ENCODE measurements at regions of chr18 and their contacts with region 1.

Region 1: DNA sequence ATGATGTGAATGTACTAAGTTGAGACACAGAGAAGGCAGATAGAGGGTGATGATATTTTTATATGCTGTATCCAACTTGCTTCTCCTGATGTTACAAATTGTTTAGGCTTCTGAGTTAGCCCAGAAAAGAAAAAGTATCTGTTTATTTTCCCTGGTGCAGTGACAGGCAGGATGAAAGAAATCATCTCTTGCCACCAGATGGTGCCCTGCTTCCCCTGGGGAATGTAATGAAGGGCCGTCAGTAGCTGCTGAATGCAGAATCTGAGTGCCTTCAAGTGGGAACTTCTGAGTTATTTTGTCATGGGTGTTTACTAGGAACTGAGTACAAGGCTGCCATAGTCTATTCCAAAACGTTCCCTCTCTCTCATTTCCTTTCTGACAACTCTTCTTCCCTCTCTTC is 525.6 kb downstream of the MBD2 start:
- DNase-seq: peak; percentile 53
- H3K4me3 ChIP-seq: no peak overlapping the region
- H3K27ac ChIP-seq: no peak overlapping the region
- H3K4me1 ChIP-seq: no peaks in the 10 kb centered on the region
- H3K27me3 ChIP-seq: no peaks in the 10 kb centered on the region
- CTCF ChIP-seq: peak; percentile 42; the same call in 1 of the 2 replicates
- EP300 ChIP-seq: no peak
- RAD21 ChIP-seq: peak; percentile 87

Region 2: GRCh38 chr18:53521068-53521467 is 177.8 kb before region 1 on chr18:
- CTCF ChIA-PET with region 1: no interaction called
- POLR2A ChIA-PET with region 1: no interaction called
- DNase-seq: no peak
- H3K4me3 ChIP-seq: no peak overlapping the region
- H3K27ac ChIP-seq: no peak overlapping the region
- H3K4me1 ChIP-seq: no peaks in the 10 kb centered on the region
- H3K27me3 ChIP-seq: no peaks in the 10 kb centered on the region
- CTCF ChIP-seq: no peak
- EP300 ChIP-seq: no peak
- RAD21 ChIP-seq: no peak

Region 3: DNA sequence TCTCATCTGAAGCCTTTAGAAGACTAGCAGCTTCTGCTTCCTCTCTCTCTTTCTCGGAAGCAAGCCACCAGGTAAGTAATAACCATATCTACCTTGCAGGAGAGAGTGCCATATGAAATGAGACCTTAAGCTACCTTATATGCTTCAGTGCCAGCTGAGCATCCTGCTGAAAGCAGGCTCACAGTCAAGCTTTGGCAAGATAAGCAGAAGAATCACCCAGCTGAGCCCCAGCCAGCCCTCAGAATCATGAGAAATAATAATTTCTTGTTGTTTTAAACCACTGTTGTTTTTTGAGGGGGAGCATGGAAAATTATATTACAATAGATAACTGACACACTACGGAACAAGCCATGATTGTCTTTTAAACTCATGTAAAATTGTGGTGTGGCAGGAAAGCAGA is 11.2 kb after region 1 on chr18:
- CTCF ChIA-PET with region 1: interaction called, 11 read pairs
- POLR2A ChIA-PET with region 1: no interaction called
- DNase-seq: no peak
- H3K4me3 ChIP-seq: no peak overlapping the region
- H3K27ac ChIP-seq: no peak overlapping the region
- H3K4me1 ChIP-seq: peaks cover 0 to 4% of the 10 kb centered on the region in 2 experiments; a peak in 2 of 4 replicates
- H3K27me3 ChIP-seq: no peaks in the 10 kb centered on the region
- CTCF ChIP-seq: no peak
- EP300 ChIP-seq: no peak
- RAD21 ChIP-seq: no peak

Region 4: GRCh38 chr18:53864770-53865169 is 165.9 kb after region 1 on chr18:
- CTCF ChIA-PET with region 1: interaction called, 11 read pairs
- POLR2A ChIA-PET with region 1: no interaction called
- DNase-seq: peak; percentile 14
- H3K4me3 ChIP-seq: no peak overlapping the region
- H3K27ac ChIP-seq: no peak overlapping the region
- H3K4me1 ChIP-seq: no peaks in the 10 kb centered on the region
- H3K27me3 ChIP-seq: no peaks in the 10 kb centered on the region
- CTCF ChIP-seq: no peak
- EP300 ChIP-seq: no peak
- RAD21 ChIP-seq: peak; percentile 63

Region 5: DNA sequence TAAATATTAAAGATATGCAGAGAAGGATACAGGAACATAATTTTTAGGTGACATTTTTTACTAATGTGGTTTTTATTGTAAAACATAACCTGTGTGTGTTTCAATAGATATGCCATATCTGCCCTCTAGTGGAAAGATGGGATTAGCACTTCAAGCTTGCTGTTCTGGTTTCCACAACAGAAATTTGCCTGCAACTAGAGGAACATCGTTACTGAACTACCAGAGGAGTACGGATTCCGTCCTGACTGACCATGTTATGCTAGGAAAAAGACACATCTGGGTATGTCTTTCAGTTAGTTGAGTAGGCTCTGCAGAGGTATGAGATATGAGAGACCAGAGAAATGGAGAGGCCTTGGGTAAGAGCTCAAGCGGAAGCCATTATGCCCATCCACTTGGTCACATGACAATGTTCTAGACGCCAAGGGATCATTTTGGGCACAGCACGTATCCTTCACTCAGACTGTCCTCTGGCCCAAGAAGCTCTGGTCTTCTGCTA is 420.7 kb after region 1 on chr18:
- CTCF ChIA-PET with region 1: interaction called, 41 read pairs
- POLR2A ChIA-PET with region 1: no interaction called
- DNase-seq: peak; percentile 30
- H3K4me3 ChIP-seq: no peak overlapping the region
- H3K27ac ChIP-seq: no peak overlapping the region
- H3K4me1 ChIP-seq: peaks cover 0 to 3% of the 10 kb centered on the region in 2 experiments; a peak in 1 of 4 replicates
- H3K27me3 ChIP-seq: no peaks in the 10 kb centered on the region
- CTCF ChIP-seq: peak; percentile 91
- EP300 ChIP-seq: no peak
- RAD21 ChIP-seq: peak; percentile 88

Region 6: DNA sequence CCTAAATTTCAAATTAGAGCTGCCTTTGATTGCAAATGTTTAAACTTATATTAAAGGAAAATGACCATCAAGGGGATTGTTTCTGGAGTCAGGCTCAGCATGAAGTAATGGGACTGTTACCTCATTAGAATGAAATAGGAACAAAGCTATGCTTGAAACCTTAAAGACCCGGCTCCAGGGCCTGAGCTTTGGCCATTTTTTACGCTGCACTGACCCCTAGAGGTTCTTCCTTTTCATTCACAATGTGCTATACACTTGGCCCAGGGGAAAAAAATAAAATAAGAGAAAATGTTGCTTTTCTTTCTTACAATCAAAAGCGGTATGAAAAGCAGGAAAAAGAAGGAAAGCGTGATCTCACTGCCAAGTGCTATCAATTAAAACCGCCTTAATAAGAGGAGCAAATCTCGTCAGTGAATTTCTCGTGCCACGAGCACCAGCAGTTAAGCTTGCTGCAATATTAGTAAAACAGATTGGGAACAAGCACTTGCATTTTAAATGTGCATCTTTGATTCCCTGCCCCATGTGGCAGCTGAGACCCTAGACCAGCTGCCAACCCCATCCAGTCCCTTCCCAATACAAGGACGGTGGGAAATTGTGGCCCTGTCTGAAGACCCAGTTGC is 429.0 kb after region 1 on chr18:
- CTCF ChIA-PET with region 1: interaction called, 10 read pairs
- POLR2A ChIA-PET with region 1: no interaction called
- DNase-seq: peak; percentile 55
- H3K4me3 ChIP-seq: no peak overlapping the region
- H3K27ac ChIP-seq: no peak overlapping the region
- H3K4me1 ChIP-seq: peaks cover 0 to 8% of the 10 kb centered on the region in 2 experiments; a peak in 1 of 4 replicates
- H3K27me3 ChIP-seq: no peaks in the 10 kb centered on the region
- CTCF ChIP-seq: peak; percentile 77
- EP300 ChIP-seq: no peak
- RAD21 ChIP-seq: peak; percentile 88

Region 7: DNA sequence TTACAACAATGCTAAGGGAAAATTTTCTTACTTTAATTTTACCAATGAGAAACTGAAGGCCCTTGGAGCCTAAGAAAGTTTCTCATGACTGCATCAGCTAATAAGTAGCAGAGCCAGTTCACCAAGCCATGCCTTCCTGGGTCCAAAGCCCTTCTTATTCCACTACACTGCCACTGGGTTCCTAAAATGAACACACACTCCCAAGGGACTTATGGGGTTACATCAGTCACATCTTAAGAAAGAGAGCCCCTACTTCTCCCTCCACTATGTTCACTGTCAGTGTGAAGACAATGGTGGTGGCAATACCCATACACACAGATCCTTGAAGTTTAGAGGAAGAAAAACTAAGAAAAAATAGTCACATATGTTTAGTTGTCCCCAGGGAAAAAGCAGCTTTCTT is 505.0 kb after region 1 on chr18:
- CTCF ChIA-PET with region 1: no interaction called
- POLR2A ChIA-PET with region 1: no interaction called
- DNase-seq: no peak
- H3K4me3 ChIP-seq: no peak overlapping the region
- H3K27ac ChIP-seq: no peak overlapping the region
- H3K4me1 ChIP-seq: no peaks in the 10 kb centered on the region; a peak in 1 of 4 replicates
- H3K27me3 ChIP-seq: no peaks in the 10 kb centered on the region
- CTCF ChIP-seq: no peak
- EP300 ChIP-seq: no peak
- RAD21 ChIP-seq: no peak

Measured in SK-N-SH (cell line).